Dorsolateral prefrontal cortex (tissue), 120 donors: ENCODE measurements at regions of chr13 and their contacts with region 1.

Region 1: GRCh38 chr13:23888658-23889614 is at the start of gene MIPEP:
- DNase-seq: peak; percentile 89 to 96 (median 94)
- H3K4me3 ChIP-seq: peak within 1 kb of the TSS; percentile 55 to 99 (median 96)
- H3K27ac ChIP-seq: peak within 1 kb of the TSS in 56 of 59 donors; percentile 36 to 92 (median 79)
- H3K27me3 ChIP-seq: no peaks in the 10 kb centered on the region
- CTCF ChIP-seq: peak; percentile 72 to 98 (median 90)
- total RNA-seq, gene MIPEP: 8.6 to 21.4 (median 12.6) TPM

Region 2: GRCh38 chr13:23146811-23147625 is 741.9 kb before region 1 on chr13:
- intact Hi-C with region 1: no loop called
- DNase-seq: no peak
- H3K4me3 ChIP-seq: no peak overlapping the region
- H3K27ac ChIP-seq: peak overlapping the region in 21 of 59 donors; percentile 11 to 55 (median 34)
- H3K27me3 ChIP-seq: no peaks in the 10 kb centered on the region
- CTCF ChIP-seq: no peak

Region 3: GRCh38 chr13:23375001-23375971 is 513.6 kb before region 1 on chr13:
- intact Hi-C with region 1: loop called in 1 of 2 experiments (anchors 10 kb)
- DNase-seq: peak; percentile 95 to 99 (median 96)
- H3K4me3 ChIP-seq: peak overlapping the region; percentile 59 to 98 (median 84)
- H3K27ac ChIP-seq: peak overlapping the region; percentile 0 to 94 (median 83)
- H3K27me3 ChIP-seq: no peaks in the 10 kb centered on the region
- CTCF ChIP-seq: peak in 39 of 56 donors; percentile 6 to 67 (median 35)